Vagina (tissue), 2 donors: ENCODE measurements at regions of chrX and their contacts with region 1.

Region 1: DNA sequence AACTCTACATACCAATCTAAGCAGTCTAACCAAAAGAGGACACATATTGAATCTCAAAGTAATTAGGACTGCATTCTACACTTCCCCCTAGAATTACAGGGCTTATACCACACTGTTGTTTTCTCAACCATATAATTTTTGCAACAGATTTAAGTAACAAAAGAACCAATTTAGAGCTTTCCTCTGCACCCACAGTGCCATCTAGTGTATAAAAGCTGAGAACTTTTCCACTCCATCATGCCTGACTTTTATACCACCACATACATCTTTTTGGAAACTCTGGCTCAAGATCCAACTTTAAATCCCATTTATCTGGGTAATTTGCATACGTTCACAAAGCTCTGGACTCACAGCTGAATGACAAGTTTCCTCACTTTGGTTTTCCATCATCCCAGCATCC is 99.5 kb downstream of the EFHC2 start:
- DNase-seq: no peak
- H3K4me3 ChIP-seq: no peak overlapping the region
- H3K27ac ChIP-seq: no peak overlapping the region
- H3K4me1 ChIP-seq: no peaks in the 10 kb centered on the region
- H3K27me3 ChIP-seq: no peaks in the 10 kb centered on the region
- CTCF ChIP-seq: peak in 2 of 3 experiments; percentile 18 to 33
- POLR2A ChIP-seq: no peak

Region 2: GRCh38 chrX:44352758-44353157 is 108.8 kb after region 1 on chrX:
- intact Hi-C with region 1: loop called (anchors 5 kb)
- DNase-seq: no peak
- H3K4me3 ChIP-seq: no peak overlapping the region
- H3K27ac ChIP-seq: no peak overlapping the region
- H3K4me1 ChIP-seq: no peaks in the 10 kb centered on the region
- H3K27me3 ChIP-seq: no peaks in the 10 kb centered on the region
- CTCF ChIP-seq: no peak
- POLR2A ChIP-seq: no peak